Cardiac septum (tissue), 1 donor: ENCODE measurements at regions of chr17 and their contacts with region 1.

Region 1: DNA sequence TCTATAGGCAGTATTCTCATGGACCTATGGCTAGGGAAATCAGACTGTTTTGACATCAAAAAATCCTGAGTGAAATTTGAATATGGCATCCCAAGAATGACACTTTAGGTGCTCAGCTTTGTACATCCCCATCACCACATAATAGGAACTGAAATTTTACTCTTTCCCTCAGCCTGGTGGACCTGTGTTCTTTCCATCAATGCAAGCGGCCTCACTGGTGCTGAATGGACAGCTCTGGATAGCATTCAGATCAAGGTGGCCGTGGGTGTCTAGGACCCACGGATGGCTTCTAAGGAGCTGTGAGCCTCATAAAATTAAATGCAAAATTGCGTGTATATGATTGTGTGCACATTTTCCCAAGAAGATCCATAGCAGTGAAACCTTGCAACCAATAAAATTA is 152.6 kb downstream of the MAP2K6 start:
- DNase-seq: no peak

Region 2: DNA sequence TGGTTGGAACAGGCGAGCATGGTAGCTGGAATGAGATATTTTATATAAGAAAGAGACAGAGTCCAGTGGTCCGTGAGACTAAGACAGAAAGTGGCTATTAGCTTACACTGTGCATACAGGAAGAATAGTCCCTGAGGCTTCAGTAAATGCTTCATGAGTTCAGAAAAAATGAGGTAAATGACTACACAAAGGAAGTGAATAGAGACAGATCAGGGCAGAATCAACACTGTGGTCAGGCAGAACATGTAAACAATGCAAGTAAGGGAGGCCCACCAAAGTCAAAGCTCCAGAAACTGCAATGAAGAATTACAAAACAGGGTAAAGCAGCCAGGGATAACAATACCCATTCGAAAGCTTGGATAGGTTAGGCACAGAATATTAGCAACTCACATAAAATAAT is 343.3 kb before region 1 on chr17:
- intact Hi-C with region 1: no loop called
- DNase-seq: no peak

Region 3: GRCh38 chr17:69625474-69625873 is 58.3 kb after region 1 on chr17:
- intact Hi-C with region 1: no loop called
- DNase-seq: no peak

Region 4: GRCh38 chr17:69870091-69870530 is 303.0 kb after region 1 on chr17:
- intact Hi-C with region 1: no loop called
- DNase-seq: no peak

Region 5: GRCh38 chr17:70552230-70552981 is 985.3 kb after region 1 on chr17:
- intact Hi-C with region 1: loop called (anchors 5 kb)
- DNase-seq: no peak